Body of pancreas (tissue), 4 donors: ENCODE measurements at regions of chr1 and their contacts with region 1.

Region 1: GRCh38 chr1:192477630-192478029 is 97.9 kb upstream of the RGS1 start:
- DNase-seq: no peak
- ATAC-seq: peak; percentile 67
- H3K4me3 ChIP-seq: no peak overlapping the region
- H3K27ac ChIP-seq: no peak overlapping the region
- H3K4me1 ChIP-seq: no peaks in the 10 kb centered on the region
- H3K27me3 ChIP-seq: no peaks in the 10 kb centered on the region
- CTCF ChIP-seq: peak in 6 of 7 experiments; percentile 19 to 83 (median 75)
- POLR2A ChIP-seq: no peak

Region 2: GRCh38 chr1:192158181-192158580 is 319.4 kb before region 1 on chr1 and contains the start of gene RGS18:
- intact Hi-C with region 1: no loop called
- DNase-seq: peak in 1 of 4 donors; percentile 52
- ATAC-seq: no peak
- H3K4me3 ChIP-seq: no peak within 1 kb of the TSS
- H3K27ac ChIP-seq: peak within 1 kb of the TSS in 1 of 4 donors; percentile 64
- H3K4me1 ChIP-seq: no peaks in the 10 kb centered on the region
- H3K27me3 ChIP-seq: no peaks in the 10 kb centered on the region
- CTCF ChIP-seq: no peak
- POLR2A ChIP-seq: peak in 1 of 3 donors; percentile 34
- total RNA-seq, gene RGS18: 1.0 to 2.3 TPM

Region 3: DNA sequence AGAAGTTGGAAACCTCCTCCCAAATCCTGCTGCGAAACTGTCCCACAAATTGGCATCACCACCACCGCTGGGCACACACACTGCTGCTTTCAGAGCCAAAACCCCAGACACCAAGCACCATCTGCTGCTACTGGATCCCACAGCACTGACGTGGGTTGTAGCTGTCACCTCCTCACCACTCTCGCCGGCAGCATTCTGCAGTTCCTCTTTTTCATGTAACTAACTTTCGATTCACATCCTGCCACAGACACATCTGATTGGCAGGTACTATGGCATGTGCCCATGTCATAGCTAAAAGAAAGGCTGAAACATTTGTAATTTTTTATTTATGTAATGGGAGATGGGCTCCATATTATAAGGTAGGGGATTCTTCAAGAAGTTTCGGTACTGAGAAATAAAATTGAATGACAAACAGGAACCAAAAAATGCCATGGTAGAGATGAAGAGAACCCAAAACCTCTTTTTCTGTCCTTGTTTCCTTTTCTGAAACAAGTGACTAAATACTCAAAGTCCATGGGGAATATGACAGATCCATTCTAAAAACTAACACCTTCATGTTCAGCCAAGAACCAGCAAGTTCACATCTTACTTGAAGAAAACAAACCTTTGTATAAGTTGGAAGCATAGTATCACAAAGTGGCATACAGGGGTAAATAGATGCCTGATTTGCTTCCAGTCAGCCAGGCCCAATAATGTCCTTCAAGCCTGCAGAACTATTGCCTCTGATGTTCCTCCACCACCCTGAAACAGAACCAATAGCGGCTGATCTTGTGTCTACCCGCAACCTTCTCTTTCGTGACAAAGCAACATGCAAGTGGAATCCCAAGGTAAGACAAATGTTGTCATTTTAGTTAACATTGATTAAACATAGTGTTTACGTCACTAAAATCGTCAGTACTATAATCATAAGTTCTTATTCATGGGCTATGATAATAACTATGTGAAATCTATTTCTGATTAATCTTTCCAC is 131.8 kb after region 1 on chr1:
- intact Hi-C with region 1: loop called (anchors 10 kb)
- DNase-seq: peak in 3 of 4 donors; percentile 28 to 79 (median 32)
- ATAC-seq: no peak
- H3K4me3 ChIP-seq: no peak overlapping the region
- H3K27ac ChIP-seq: no peak overlapping the region
- H3K4me1 ChIP-seq: no peaks in the 10 kb centered on the region
- H3K27me3 ChIP-seq: no peaks in the 10 kb centered on the region
- CTCF ChIP-seq: no peak
- POLR2A ChIP-seq: peak in 1 of 3 donors; percentile 25

Region 4: GRCh38 chr1:192702212-192702993 is 224.8 kb after region 1 on chr1:
- intact Hi-C with region 1: no loop called
- DNase-seq: no peak
- ATAC-seq: no peak
- H3K4me3 ChIP-seq: no peak overlapping the region
- H3K27ac ChIP-seq: no peak overlapping the region
- H3K4me1 ChIP-seq: peaks cover 16% of the 10 kb centered on the region
- H3K27me3 ChIP-seq: no peaks in the 10 kb centered on the region
- CTCF ChIP-seq: no peak
- POLR2A ChIP-seq: no peak

Region 5: GRCh38 chr1:193019442-193020026 is 541.9 kb after region 1 on chr1:
- intact Hi-C with region 1: loop called (anchors 10 kb)
- DNase-seq: peak in 1 of 4 donors; percentile 12
- ATAC-seq: peak; percentile 74
- H3K4me3 ChIP-seq: no peak overlapping the region
- H3K27ac ChIP-seq: no peak overlapping the region
- H3K4me1 ChIP-seq: peaks cover 3% of the 10 kb centered on the region
- H3K27me3 ChIP-seq: no peaks in the 10 kb centered on the region
- CTCF ChIP-seq: peak; percentile 14 to 74 (median 64)
- POLR2A ChIP-seq: no peak